GM10248 (cell line): ENCODE measurements at regions of chr15 and their contacts with region 1.

Region 1: GRCh38 chr15:80776420-80777045 is 2.6 kb upstream of the CEMIP start:
- DNase-seq: peak; percentile 77
- CTCF ChIP-seq: peak; percentile 82

Region 2: GRCh38 chr15:80445300-80446041 is 331.1 kb before region 1 on chr15:
- CTCF ChIA-PET with region 1: interaction called, 11 read pairs
- POLR2A ChIA-PET with region 1: no interaction called
- DNase-seq: no peak
- CTCF ChIP-seq: no peak

Region 3: DNA sequence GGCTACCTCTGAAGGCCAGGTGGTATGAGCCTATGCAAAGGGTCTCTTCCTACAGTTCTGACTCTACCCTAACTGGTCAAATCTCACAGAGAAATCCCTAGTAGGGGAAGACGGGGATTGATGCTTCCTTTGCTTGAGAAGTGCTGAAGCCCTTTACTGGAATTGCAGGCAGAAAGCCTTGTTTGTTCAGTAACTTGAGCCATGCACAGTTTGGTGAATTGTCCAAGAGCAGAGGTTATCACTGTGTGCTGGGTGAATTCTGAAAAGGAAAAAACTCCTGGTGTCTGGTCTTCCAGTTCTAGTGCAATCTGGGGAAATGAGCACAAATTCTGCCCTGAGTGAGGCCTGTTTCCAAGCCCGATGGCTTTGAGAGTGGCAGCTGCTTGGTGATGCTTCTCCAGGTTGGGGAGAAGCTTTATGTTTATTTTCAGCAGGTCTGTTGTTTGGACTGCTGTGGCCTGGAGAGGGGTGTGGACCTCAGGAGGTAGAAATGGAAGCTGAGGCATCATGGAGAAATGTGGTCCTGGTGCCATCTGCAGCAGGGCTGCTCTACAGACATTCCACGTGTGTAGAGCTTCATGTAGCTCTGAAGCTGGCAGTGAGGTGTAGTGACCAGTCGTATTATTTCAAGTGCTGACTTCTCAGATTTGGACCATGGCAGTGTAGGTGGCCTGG is 311.4 kb before region 1 on chr15:
- CTCF ChIA-PET with region 1: interaction called, 10 read pairs
- POLR2A ChIA-PET with region 1: no interaction called
- DNase-seq: no peak
- CTCF ChIP-seq: no peak

Region 4: GRCh38 chr15:80766275-80766674 is 10.3 kb before region 1 on chr15:
- CTCF ChIA-PET with region 1: interaction called, 26 read pairs
- POLR2A ChIA-PET with region 1: no interaction called
- DNase-seq: no peak
- CTCF ChIP-seq: no peak

Region 5: GRCh38 chr15:80811781-80812315 is 35.3 kb after region 1 on chr15:
- CTCF ChIA-PET with region 1: interaction called, 10 read pairs
- POLR2A ChIA-PET with region 1: interaction called, 3 read pairs
- DNase-seq: no peak
- CTCF ChIP-seq: no peak